ENCODE measurements at regions of chr5 and their contacts with region 1.

Region 1: DNA sequence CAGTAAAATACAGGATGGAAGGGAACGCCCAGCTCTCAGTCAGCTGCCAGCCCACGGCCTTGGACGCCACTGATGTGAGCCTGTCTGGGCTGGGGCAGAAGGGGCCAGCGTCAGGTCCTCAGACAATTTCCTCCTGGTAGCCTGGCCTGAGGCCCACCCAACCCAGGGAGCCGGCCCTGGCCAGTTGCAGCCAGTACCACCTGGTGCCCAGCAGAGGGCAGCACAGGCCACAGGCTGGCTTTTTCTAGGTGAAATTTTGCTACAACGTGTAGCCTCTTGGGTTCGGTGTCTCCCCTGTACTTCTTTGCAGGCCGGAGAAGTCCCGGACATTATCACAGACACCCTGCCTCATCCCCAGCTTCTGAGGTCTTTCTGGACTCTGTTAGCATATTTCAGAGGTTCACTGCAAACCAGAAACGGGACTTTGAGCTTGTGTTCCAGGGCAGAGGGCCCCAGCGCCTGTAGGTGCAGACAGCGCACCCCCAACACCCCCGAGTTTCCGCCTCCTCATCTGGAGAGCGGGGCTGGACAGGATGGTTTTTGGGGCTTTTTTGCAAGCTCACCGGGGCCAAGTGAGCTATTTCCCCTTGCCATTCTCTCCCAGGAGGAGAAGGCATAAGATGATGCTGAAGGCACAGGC is 45.9 kb upstream of the KCNMB1 start:
- DNase-seq: peak; percentile 81
- ATAC-seq: peak; percentile 93

Region 2: DNA sequence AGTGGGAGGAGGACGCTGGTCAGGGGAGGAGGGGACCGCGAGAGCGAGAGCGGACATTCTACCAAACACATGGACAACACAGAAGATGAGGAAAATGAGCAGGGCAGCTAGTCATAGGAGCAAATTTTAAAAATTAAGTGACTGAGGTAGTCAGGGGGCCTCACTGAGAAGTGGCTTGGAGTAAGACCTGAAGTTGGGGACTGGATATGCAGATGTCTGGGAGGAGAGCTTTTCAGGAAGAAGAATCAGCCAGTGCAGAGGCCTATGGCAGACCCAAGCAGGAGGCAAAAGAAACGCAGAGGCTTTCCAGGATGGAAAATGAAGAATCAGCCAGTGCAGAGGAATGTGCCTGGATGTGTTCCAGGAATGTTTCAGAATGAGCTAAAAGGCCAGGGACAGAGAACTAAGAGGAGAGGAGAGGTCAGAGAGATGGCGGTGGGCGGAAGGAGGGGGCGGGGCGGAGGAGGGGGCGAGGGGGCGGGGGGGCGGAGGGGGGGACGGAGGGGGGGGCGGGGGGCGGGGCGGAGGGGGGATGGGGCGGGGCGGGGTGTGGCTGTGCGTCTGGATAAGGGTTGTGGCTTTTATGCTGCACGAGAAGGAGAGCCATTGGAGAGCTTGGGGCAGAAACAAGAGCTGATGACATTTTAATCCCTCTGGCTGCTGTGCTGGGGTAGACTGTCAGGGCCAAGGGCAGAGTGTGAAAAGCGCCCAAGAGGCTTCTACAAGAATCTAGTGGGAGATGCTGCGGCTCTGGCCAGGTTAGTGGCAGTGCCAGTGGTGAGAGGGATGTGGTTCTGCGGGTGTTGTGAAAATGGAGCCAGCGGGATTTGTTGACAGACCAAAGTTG is 198.4 kb after region 1 on chr5:
- intact Hi-C with region 1: loop called (anchors 2 kb)
- DNase-seq: no peak
- ATAC-seq: peak; percentile 78